ENCODE measurements at regions of chr4 and their contacts with region 1.

Region 1: GRCh38 chr4:129641179-129641578 is 545.2 kb downstream of the C4orf33 start:
- DNase-seq: no peak
- ATAC-seq: no peak

Region 2: GRCh38 chr4:128737098-128737513 is 904.1 kb before region 1 on chr4:
- intact Hi-C with region 1: no loop called
- DNase-seq: peak; percentile 50
- ATAC-seq: peak; percentile 88

Region 3: DNA sequence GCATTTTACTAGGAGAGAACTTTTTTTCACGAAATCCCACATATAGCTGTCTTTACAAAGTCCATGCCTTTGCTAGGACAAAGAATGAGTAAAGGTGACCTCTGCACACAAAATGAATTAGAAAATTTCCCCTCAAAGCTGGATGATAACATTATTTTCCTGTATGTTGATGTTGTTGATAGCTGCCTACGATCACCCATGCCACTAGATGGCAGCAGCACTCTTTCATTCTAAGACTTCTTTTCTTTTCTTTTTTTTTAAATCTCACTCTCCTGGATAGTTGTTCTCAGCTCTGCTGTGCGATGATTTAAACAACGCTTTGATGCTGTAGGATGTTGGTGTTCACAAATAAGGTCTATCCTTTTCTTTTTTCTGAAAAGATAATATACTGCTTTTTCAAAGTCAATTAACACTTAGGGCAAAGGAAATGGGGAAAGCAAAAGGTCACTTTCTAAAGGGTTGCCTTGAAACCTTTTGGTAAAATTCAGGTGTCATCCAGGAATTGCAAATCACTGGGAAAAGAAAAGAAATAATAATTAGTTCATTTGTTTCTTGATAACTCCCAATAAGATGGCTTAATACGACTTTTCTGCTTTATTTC is 278.4 kb before region 1 on chr4:
- intact Hi-C with region 1: loop called (anchors 2 kb)
- DNase-seq: peak; percentile 34
- ATAC-seq: peak; percentile 50

Region 4: DNA sequence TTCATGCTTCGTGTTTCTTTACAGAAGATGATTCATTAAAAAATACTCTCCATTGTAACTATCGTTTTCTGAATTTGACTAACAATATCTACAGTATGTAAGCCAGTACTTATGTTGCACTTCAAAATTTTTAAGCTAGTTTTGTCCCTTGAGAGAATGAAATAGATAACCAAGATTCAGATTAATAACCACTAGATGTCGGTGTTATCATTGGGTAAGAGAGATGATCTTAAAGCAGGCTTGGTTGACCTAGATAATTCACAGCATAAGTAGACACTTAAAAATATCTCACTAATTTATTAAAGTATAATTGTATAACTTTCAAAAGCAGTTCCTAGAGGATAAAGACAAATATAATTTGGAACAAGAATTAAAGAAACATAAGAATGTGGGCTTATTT is 114.4 kb before region 1 on chr4:
- intact Hi-C with region 1: loop called (anchors 5 kb)
- DNase-seq: no peak
- ATAC-seq: no peak

Region 5: DNA sequence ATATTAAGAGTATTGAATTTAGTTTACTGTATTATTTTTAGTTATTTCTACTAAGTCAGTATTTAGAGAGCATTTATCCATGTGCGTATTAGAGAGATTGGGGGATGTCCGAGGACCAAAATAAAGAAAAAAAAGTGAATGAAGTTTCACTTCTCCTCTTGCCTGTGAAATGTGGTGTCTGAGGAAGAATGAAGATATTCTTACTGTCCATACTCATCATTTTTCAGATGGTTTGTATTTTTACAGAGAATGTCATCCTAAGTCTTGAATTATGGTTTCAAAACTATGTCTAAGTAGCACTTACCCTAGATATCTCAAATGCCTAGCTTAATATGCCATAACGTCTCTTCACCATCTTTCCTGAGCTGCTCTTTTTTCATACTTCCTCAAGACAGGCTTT is 309.0 kb after region 1 on chr4:
- intact Hi-C with region 1: no loop called
- DNase-seq: no peak
- ATAC-seq: no peak

Measured in left ventricle myocardium superior (tissue), 1 donor.